Colonic mucosa (tissue), 4 donors: ENCODE measurements at regions of chr9 and their contacts with region 1.

Region 1: DNA sequence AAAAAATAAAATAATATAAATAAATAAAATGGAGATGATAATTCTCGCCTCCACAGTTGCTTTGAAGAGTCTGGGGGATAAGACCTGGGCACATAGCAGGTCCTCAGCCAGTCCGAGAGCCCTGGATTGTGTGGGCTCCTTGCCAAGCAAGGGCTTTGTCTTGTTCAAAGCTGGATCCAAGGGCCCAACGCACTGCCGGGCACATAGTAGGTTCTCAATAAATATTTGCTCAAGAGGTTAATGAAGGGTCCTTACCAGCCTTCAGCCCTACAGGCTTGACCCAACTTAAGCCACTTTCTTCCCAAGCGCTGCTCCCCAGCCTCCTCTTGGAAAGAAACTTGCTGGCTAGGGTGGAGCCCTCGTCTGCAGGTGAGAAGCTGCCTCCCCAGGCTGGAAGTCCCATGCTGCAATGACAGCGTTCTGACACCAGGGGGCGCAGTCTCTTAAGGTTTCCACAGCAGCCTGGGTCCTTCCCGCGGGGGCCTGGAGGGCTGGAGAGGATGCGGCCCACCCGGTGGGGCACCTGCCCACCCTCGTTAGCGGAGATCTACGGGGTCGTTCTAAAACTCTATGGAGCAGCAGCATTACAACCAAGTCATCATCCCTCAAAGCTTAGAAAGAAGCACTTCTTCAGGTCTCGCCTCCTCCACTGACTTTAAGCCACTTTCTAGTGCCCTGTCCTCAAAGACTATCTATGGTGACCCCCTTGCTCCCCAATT is 115.2 kb downstream of the LHX2 start:
- DNase-seq: peak; percentile 84
- H3K4me3 ChIP-seq: no peak overlapping the region
- H3K27ac ChIP-seq: no peak overlapping the region
- H3K4me1 ChIP-seq: no peaks in the 10 kb centered on the region
- H3K27me3 ChIP-seq: no peaks in the 10 kb centered on the region
- CTCF ChIP-seq: peak; percentile 99

Region 2: DNA sequence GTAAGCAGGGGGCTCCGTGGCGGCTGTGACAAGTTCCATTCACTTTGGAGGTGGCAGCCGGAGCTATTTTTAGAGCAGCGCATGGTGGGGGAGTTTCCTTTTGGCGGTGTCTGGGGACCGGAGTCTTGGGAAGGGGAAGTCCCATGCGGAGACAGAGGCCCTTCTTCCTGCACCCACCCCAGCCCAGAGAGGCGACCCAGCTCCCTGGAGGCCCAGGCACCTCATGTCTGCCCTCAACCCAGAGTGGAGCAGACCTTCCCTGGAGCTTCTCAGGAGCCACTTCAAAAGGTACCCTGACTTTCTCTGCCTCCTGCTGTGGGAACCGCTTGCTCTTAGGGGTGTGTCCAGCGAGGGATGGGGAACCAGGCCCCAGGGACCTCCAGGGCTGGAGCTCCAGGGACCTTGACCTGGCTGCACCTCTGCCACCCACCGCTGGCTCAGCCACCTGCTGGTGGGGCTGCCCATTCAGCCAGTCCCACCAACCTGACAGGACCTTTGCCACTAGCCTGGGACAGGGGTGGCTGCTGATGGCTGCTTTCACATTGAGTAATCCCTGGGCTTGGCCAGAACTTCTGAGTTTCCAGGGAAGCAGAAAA is 165.2 kb after region 1 on chr9:
- intact Hi-C with region 1: loop called (anchors 10 kb)
- DNase-seq: no peak
- H3K4me3 ChIP-seq: no peak overlapping the region
- H3K27ac ChIP-seq: no peak overlapping the region
- H3K4me1 ChIP-seq: peaks cover 5% of the 10 kb centered on the region
- H3K27me3 ChIP-seq: no peaks in the 10 kb centered on the region
- CTCF ChIP-seq: no peak

Region 3: DNA sequence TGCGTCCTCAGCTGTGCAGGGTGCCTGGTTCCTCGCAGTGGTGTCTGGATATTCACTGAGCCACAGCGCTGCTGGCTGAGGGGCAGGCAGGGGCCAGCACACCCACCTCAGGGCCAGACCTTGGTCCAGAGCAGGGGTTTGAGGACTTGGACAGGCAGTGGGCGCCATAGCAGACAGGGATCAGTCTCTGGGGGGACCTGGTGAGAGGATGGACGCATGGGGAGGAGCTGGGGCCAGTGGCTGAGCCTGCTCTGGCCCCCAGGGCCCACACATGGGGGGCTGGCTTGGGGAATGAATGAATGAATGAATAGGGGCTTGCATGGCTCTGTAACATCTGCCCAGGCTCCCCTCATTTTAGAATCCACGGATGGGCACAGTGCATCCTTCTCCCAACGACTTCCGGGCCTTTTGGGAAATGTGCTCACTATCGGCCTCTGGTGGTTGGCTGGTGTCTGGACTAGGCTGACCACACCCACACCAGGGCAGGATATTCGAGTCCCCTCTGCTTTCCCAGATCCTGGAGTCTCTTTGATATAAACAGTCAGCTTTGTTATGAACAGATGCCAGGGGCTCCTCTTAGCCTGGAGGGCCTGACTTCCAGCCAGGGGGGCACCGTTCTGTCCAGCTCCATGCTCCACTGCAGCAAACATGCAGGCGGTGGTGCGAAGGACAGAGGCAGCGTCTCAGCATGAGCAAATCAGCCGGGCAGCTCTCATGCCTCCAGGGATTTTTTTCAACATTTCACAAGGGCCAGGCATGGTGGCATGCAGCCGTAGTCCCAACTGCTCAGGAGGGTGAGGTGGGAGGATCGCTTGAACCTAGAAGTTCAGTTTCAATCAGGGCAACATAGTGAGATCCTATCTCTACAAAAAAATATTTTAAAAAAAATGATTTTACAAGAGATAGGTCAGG is 193.6 kb after region 1 on chr9:
- intact Hi-C with region 1: loop called (anchors 2 kb)
- DNase-seq: peak; percentile 83
- H3K4me3 ChIP-seq: no peak overlapping the region
- H3K27ac ChIP-seq: no peak overlapping the region
- H3K4me1 ChIP-seq: no peaks in the 10 kb centered on the region
- H3K27me3 ChIP-seq: no peaks in the 10 kb centered on the region
- CTCF ChIP-seq: peak; percentile 76

Region 4: GRCh38 chr9:124457887-124458431 is 331.2 kb after region 1 on chr9:
- intact Hi-C with region 1: no loop called
- DNase-seq: no peak
- H3K4me3 ChIP-seq: no peak overlapping the region
- H3K27ac ChIP-seq: no peak overlapping the region
- H3K4me1 ChIP-seq: no peaks in the 10 kb centered on the region
- H3K27me3 ChIP-seq: peaks cover 6% of the 10 kb centered on the region
- CTCF ChIP-seq: no peak

Region 5: GRCh38 chr9:124532897-124533296 is 406.2 kb after region 1 on chr9:
- intact Hi-C with region 1: loop called (anchors 10 kb)
- DNase-seq: no peak
- H3K4me3 ChIP-seq: no peak overlapping the region
- H3K27ac ChIP-seq: no peak overlapping the region
- H3K4me1 ChIP-seq: no peaks in the 10 kb centered on the region
- H3K27me3 ChIP-seq: no peaks in the 10 kb centered on the region
- CTCF ChIP-seq: no peak

Region 6: DNA sequence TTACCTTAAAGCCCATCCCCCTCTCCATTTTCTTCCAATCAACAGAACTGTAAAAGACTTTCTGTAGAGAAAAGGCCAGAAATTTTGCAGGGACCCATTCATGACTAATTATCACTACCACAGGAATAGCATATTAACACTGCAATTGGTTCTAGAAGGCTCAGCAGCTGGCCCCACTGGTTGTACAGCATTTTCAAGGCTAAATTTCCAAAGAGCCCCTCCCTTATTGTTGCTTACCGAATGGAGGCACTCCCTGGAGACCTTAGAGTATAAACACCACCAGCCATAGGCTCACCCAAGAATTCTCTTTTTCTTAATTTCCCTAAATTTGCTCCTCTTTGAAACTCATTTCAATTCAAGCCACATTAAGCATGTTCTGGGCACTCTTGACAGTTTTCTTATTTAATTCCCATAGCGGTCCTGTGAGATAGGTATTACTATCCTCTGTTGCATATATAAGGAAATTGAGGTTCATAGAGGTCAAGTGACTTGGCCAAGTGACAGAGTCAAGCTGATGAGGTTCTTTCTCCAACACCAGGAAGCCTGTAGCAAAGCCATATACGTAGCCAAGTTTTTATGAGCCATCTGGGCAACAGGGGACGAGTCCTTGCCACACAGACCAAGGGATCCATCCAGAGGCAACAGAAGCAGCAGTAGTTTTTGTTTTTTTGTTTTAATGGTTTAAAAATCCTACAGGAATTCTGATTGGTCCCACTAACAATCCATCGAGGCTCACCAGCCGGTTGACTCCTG is 464.3 kb after region 1 on chr9:
- intact Hi-C with region 1: no loop called
- DNase-seq: peak; percentile 50
- H3K4me3 ChIP-seq: no peak overlapping the region
- H3K27ac ChIP-seq: no peak overlapping the region
- H3K4me1 ChIP-seq: no peaks in the 10 kb centered on the region
- H3K27me3 ChIP-seq: no peaks in the 10 kb centered on the region
- CTCF ChIP-seq: no peak